PC-3 (cell line): ENCODE measurements at regions of chr11 and their contacts with region 1.

Region 1: GRCh38 chr11:94183886-94184264 is 55.2 kb downstream of the PANX1 start:
- DNase-seq: peak; percentile 89
- ATAC-seq: peak; percentile 81
- H3K4me3 ChIP-seq: no peak overlapping the region; the same call in 1 of the 2 replicates
- H3K27ac ChIP-seq: no peak overlapping the region
- H3K4me1 ChIP-seq: peaks cover 4% of the 10 kb centered on the region; the same call in 1 of the 2 replicates
- H3K27me3 ChIP-seq: no peaks in the 10 kb centered on the region
- CTCF ChIP-seq: peak; percentile 99

Region 2: GRCh38 chr11:94283678-94284077 is 99.8 kb after region 1 on chr11:
- CTCF ChIA-PET with region 1: no interaction called
- POLR2A ChIA-PET with region 1: no interaction called
- intact Hi-C with region 1: loop called (anchors 10 kb)
- DNase-seq: no peak
- ATAC-seq: no peak
- H3K4me3 ChIP-seq: no peak overlapping the region
- H3K27ac ChIP-seq: no peak overlapping the region
- H3K4me1 ChIP-seq: no peaks in the 10 kb centered on the region
- H3K27me3 ChIP-seq: no peaks in the 10 kb centered on the region
- CTCF ChIP-seq: no peak